H1 (cell line): ENCODE measurements at regions of chr4 and their contacts with region 1.

Region 1: GRCh38 chr4:175906381-175906780 is 94.3 kb upstream of the GPM6A start:
- DNase-seq: no peak
- H3K4me3 ChIP-seq: no peak overlapping the region
- H3K27ac ChIP-seq: no peak overlapping the region
- H3K4me1 ChIP-seq: peaks cover 0 to 6% (median 0%) of the 10 kb centered on the region in 4 experiments; a peak in 2 of 7 replicates
- H3K27me3 ChIP-seq: no peaks in the 10 kb centered on the region
- CTCF ChIP-seq: no peak
- EP300 ChIP-seq: no peak
- POLR2A ChIP-seq: no peak
- RAD21 ChIP-seq: no peak

Region 2: GRCh38 chr4:175891851-175892250 is 14.5 kb before region 1 on chr4:
- CTCF ChIA-PET with region 1: interaction called, 13 read pairs
- POLR2A ChIA-PET with region 1: no interaction called
- DNase-seq: no peak
- H3K4me3 ChIP-seq: no peak overlapping the region
- H3K27ac ChIP-seq: no peak overlapping the region
- H3K4me1 ChIP-seq: no peaks in the 10 kb centered on the region
- H3K27me3 ChIP-seq: no peaks in the 10 kb centered on the region
- CTCF ChIP-seq: peak in 2 of 3 experiments; percentile 9 to 50; a peak in 2 of 4 replicates
- EP300 ChIP-seq: no peak
- POLR2A ChIP-seq: no peak
- RAD21 ChIP-seq: peak; percentile 56 to 61